Activated CD4-positive, alpha-beta T cell treated with anti-CD3 and anti-CD28 coated beads, Interleukin-2, amount 10 ng/mL, durations not matched to agents 24 days and 14 days (primary cell): ENCODE measurements at regions of chr2 and their contacts with region 1.

Region 1: GRCh38 chr2:218395797-218396687 is 3.6 kb upstream of the CTDSP1 start:
- DNase-seq: peak; percentile 98
- H3K4me3 Mint-ChIP-seq: peak overlapping the region; percentile 83
- H3K27ac Mint-ChIP-seq: peak overlapping the region; percentile 90
- H3K4me1 Mint-ChIP-seq: peaks cover 26% of the 10 kb centered on the region
- H3K27me3 Mint-ChIP-seq: no peaks in the 10 kb centered on the region

Region 2: GRCh38 chr2:218060118-218060517 is 335.9 kb before region 1 on chr2:
- intact Hi-C with region 1: no loop called
- DNase-seq: no peak
- H3K4me3 Mint-ChIP-seq: no peak overlapping the region
- H3K27ac Mint-ChIP-seq: no peak overlapping the region
- H3K4me1 Mint-ChIP-seq: no peaks in the 10 kb centered on the region
- H3K27me3 Mint-ChIP-seq: peaks cover 18% of the 10 kb centered on the region

Region 3: DNA sequence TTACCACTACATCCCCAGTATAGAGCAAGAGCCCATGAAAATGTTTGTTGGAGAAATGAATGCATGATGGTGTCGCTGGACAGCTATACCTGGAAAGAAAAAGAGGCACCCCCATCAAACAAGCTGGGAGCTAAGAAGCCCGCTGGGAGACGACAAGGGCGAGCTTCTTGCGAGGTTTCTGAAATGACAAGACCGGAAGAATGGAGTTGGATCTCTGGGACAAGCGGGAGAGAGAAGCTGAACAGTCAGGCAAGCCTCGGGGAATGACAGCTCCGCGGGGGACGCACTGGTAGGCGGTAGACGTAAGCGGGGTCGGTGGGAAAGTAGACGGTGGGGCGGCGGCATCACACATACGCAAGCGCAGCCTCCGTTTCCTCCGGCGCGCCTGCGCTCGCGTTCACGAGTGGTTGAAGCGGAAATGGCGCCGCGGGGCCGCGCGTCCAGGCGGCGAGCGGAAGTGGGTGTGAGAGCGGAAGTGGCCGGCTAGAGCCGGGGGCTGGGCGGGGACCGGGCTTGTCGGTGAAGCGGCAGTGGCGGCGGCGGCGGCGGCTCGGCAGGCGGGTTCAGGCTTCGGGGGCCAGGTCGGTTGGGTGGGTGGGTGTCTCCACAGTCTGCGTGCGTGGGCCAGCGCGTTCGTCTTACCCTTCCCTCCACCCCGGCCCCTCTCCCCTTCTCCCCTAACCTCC is 179.2 kb before region 1 on chr2 and contains the start of gene ARPC2:
- intact Hi-C with region 1: loop called (anchors 2 kb)
- DNase-seq: peak; percentile 99
- H3K4me3 Mint-ChIP-seq: peak within 1 kb of the TSS; percentile 89
- H3K27ac Mint-ChIP-seq: peak within 1 kb of the TSS; percentile 94
- H3K4me1 Mint-ChIP-seq: peaks cover 37% of the 10 kb centered on the region
- H3K27me3 Mint-ChIP-seq: peaks cover 4% of the 10 kb centered on the region
- total RNA-seq, gene ARPC2: 515 and 516 TPM in 2 replicates

Region 4: GRCh38 chr2:218301176-218301819 is 94.7 kb before region 1 on chr2:
- intact Hi-C with region 1: loop called (anchors 1 kb)
- DNase-seq: peak; percentile 97
- H3K4me3 Mint-ChIP-seq: no peak overlapping the region
- H3K27ac Mint-ChIP-seq: no peak overlapping the region
- H3K4me1 Mint-ChIP-seq: peaks cover 5% of the 10 kb centered on the region
- H3K27me3 Mint-ChIP-seq: no peaks in the 10 kb centered on the region

Region 5: DNA sequence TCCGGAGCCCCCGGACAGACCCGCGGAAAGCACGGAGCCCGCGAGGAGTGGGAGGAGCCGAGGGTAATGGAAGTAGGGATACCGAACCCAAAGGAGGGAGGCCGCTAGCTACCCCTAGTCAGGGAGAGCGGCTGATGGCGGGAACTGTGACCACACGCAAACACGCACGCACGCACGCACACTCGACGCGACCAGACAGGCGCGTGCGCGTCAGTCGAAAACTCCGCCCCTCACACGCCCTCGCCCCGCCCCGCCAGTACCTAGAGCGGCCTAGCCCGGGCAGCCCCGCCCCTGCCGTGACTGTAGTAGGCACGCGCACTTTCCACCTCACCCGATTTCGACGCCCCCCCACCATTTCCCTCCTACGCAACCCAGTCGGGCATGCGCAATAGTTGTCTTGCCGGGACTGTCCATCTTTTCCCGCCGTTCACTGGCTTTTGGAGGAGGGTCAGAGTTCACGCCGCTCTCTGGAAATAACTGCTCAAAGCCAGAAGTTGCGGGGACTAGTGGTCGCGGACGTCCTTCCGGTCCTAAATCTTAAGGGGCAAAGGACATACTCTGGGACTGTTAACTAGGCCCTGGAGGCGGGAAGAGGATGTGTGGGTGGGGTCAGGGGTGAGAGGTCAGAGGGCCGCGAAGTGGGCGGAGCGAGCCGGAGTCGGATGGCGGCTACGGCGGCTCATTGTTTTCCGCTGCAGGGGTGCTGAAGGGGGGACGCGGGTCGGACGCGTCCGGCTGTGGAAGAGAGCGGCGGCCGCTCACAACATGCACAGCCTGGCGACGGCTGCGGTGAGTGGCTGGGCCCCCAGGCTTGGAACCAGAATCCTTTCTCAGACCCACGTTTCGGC is 172.4 kb after region 1 on chr2 and contains the starts of genes CNOT9 and USP37:
- intact Hi-C with region 1: loop called (anchors 1 kb)
- DNase-seq: peak; percentile 100
- H3K4me3 Mint-ChIP-seq: peak within 1 kb of the TSS; percentile 93
- H3K27ac Mint-ChIP-seq: peak within 1 kb of the TSS; percentile 100
- H3K4me1 Mint-ChIP-seq: peaks cover 52% of the 10 kb centered on the region
- H3K27me3 Mint-ChIP-seq: no peaks in the 10 kb centered on the region
- total RNA-seq, gene CNOT9: 131 and 134 TPM in 2 replicates
- total RNA-seq, gene USP37: 45.0 and 45.5 TPM in 2 replicates

Region 6: GRCh38 chr2:218605432-218605831 is 209.4 kb after region 1 on chr2:
- intact Hi-C with region 1: no loop called
- DNase-seq: no peak
- H3K4me3 Mint-ChIP-seq: no peak overlapping the region
- H3K27ac Mint-ChIP-seq: no peak overlapping the region
- H3K4me1 Mint-ChIP-seq: no peaks in the 10 kb centered on the region
- H3K27me3 Mint-ChIP-seq: peaks cover 11% of the 10 kb centered on the region

Region 7: DNA sequence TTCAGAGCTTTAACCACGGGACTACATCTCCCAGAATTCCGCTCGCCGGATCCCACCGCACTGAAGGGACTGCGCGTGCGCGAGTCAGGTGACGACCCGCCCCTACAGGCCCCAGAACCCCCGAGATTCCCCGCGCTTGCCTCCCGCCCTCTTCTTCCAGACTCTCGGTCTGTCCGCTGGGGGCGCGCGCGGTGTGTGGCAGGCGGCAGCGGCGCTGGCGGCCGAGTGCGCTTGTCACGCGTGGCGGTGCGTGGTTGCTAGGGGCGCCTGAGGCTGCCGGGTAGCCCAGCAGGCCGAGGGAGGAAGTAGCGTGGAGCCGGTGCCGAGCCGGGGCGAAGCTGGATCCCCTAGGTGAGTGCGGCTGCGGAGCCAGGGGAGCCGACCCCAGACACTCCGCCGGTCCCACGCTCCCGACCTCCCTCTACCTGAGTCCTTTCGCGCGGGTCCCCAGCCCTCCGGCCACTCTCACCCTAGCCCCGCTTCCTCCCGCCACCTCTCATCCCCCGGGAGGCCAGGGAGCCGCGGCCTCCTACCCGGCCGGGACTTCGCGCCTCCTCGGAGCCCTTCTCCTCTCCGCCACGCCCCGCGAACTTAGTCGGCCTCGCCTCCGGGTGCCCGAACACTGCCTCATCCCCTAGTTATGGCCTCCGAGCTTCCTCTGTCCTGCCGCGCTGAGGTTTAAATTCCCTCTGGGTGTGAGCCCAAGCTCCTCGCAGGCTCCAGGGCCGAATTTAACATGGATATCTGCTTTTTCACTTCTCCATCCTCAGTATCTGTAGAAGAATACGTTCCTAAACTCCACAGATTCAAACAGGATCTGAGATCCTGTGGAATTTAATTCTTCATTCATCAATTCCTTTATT is 314.9 kb after region 1 on chr2 and contains the start of gene TTLL4:
- intact Hi-C with region 1: loop called (anchors 2 kb)
- DNase-seq: peak; percentile 100
- H3K4me3 Mint-ChIP-seq: peak within 1 kb of the TSS; percentile 94
- H3K27ac Mint-ChIP-seq: peak within 1 kb of the TSS; percentile 85
- H3K4me1 Mint-ChIP-seq: peaks cover 18% of the 10 kb centered on the region
- H3K27me3 Mint-ChIP-seq: peaks cover 3% of the 10 kb centered on the region
- total RNA-seq, gene TTLL4: 66.1 and 71.2 TPM in 2 replicates

Region 8: DNA sequence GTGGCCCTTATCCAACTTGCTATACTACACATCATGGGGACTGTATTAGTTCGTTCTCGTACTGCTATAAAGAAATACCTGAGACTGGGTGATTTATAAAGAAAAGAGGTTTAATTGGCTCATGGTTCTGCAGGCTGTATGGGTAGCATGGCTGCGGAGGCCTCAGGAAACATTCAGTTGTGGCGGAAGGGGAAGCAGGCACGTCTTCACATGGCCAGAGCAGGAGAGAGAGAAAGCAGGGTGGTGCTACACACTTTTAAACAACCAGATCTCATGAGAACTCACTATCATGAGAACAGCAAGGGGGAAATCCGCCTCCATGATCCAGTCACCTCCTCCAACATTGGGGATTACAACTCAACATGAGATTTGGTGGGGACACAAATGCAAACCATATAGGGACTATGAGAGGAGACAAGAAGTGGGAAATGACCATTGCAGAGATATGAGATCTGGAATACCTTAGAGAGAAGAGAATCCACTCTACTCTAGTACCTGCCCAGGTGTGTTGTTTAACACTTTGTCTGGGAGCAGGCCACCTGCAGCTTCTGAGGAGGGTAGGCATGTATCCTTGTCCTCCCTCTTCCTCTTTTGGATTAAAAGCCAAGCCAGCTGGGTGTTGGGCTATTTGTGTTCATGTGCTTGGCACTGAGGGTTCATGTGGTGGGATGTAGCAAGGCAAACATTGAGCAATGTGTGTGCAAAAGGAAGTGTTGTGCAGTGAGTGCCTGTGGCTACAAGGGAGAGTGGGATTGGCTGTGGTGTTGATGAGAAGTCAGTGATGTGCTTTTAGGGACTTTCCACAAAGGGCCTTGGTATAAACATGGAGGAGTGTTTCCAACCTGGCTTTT is 337.4 kb after region 1 on chr2:
- intact Hi-C with region 1: no loop called
- DNase-seq: peak; percentile 83
- H3K4me3 Mint-ChIP-seq: peak overlapping the region; percentile 32
- H3K27ac Mint-ChIP-seq: peak overlapping the region; percentile 80
- H3K4me1 Mint-ChIP-seq: peaks cover 34% of the 10 kb centered on the region
- H3K27me3 Mint-ChIP-seq: no peaks in the 10 kb centered on the region

Region 9: DNA sequence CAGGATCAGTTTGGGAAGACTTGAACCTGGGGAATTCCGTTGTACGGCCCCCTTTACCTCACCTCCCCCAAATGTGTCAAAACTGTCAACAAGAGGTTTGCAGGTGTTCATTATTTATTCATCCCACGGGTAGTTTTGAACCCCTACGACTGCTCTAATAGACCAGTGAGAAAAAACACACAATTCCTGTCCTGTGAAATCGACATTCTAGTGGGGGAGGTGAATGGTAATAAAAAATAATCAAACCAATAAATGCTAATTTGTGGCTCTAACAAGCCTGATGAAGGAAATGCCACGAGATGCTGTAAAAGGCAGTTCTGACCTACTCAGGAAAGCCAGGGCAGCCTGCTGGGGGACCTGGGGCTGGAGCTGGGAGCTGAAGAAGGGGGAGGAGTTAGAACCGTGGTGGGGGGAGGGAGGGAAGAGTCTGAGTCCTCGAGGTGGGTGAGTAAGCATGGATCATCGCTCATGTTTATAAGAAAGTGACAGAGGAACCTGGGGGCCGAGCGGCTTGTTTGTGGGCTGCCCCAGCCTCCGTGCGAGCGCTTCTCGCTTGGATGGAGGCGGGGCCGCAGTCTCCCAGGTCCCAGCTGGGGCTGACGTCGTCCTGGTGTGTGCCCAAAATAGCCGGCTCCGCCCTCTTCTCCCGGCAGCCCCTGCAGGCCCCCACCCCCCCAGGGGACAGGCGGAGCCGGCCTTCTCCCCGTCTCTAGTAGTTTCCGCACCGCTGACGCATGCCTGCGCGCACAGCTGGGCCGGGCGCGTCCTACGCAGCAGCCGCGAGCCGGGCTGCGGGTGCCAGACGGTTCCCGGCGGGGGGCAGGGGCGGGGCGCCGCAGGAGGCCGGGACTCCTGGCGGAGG is 882.8 kb after region 1 on chr2 and contains the start of gene DNAJB2:
- intact Hi-C with region 1: loop called (anchors 2 kb)
- DNase-seq: peak; percentile 100
- H3K4me3 Mint-ChIP-seq: peak within 1 kb of the TSS; percentile 97
- H3K27ac Mint-ChIP-seq: peak within 1 kb of the TSS; percentile 96
- H3K4me1 Mint-ChIP-seq: peaks cover 42% of the 10 kb centered on the region
- H3K27me3 Mint-ChIP-seq: no peaks in the 10 kb centered on the region
- total RNA-seq, gene DNAJB2: 49.7 and 52.4 TPM in 2 replicates